ENCODE measurements at regions of chr17 and their contacts with region 1.

Region 1: DNA sequence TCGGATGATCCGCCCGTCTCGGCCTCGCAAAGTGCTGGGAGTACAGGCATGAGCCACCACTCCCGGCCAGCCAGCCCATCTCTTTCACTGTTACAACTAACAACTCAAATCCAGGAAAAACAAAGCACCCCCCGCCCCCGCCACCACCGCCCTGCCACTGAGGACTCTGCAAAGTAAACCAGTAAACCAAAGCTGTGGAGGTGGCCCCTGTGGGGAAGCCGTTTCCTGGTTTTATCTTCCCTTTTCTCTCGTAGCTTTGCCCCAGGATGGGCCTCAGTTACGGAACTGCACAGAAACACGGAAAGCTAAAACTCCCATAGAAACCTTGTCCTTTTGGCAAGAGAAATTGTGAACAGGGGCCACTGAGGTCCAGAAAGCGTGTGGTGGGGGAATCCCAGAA is 17.5 kb downstream of the CHMP6 start:
- DNase-seq: no peak
- H3K4me3 ChIP-seq: no peak overlapping the region
- H3K27ac ChIP-seq: no peak overlapping the region
- H3K27me3 ChIP-seq: peaks cover 22% of the 10 kb centered on the region
- CTCF ChIP-seq: no peak

Region 2: GRCh38 chr17:80892019-80892855 is 116.9 kb before region 1 on chr17:
- CTCF ChIA-PET with region 1: no interaction called
- POLR2A ChIA-PET with region 1: no interaction called
- DNase-seq: peak; percentile 94
- H3K4me3 ChIP-seq: peak overlapping the region; percentile 10; the same call in 1 of the 2 replicates
- H3K27ac ChIP-seq: peak overlapping the region; percentile 90
- H3K27me3 ChIP-seq: no peaks in the 10 kb centered on the region
- CTCF ChIP-seq: no peak

Region 3: DNA sequence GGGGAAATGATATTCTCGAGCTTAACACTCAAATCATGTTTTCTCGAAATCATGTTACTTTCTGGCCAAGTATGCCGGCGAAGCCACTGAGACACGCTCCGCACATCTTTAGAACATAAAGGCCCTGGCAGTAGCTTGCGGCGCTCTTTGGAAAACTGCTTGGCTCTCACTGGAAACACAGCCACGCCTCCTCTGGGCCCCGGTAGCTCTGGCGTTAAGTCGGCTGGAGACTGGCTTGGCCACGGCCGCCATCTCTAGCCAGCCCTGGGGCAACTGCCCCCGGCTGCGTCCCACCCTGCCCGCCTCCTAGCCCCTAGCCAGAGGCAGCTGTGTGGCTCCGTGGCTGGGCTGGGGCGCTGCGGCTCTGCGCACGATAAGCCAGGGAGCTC is 16.6 kb after region 1 on chr17:
- CTCF ChIA-PET with region 1: interaction called, 15 read pairs
- POLR2A ChIA-PET with region 1: no interaction called
- DNase-seq: no peak
- H3K4me3 ChIP-seq: no peak overlapping the region
- H3K27ac ChIP-seq: no peak overlapping the region
- H3K27me3 ChIP-seq: peaks cover 32% of the 10 kb centered on the region
- CTCF ChIP-seq: no peak

Region 4: GRCh38 chr17:81135503-81136278 is 126.6 kb after region 1 on chr17:
- CTCF ChIA-PET with region 1: no interaction called
- POLR2A ChIA-PET with region 1: no interaction called
- DNase-seq: no peak
- H3K4me3 ChIP-seq: no peak overlapping the region
- H3K27ac ChIP-seq: no peak overlapping the region
- H3K27me3 ChIP-seq: peaks cover 5% of the 10 kb centered on the region
- CTCF ChIP-seq: no peak

Region 5: GRCh38 chr17:81165246-81166032 is 156.3 kb after region 1 on chr17 and contains the start of gene PVALEF:
- CTCF ChIA-PET with region 1: no interaction called
- POLR2A ChIA-PET with region 1: no interaction called
- DNase-seq: no peak
- H3K4me3 ChIP-seq: peak within 1 kb of the TSS; percentile 4; the same call in 1 of the 2 replicates
- H3K27ac ChIP-seq: no peak within 1 kb of the TSS
- H3K27me3 ChIP-seq: peaks cover 47% of the 10 kb centered on the region
- CTCF ChIP-seq: no peak
- polyA plus RNA-seq, gene PVALEF: not detected in 2 replicates